Aorta (tissue), 5 donors: ENCODE measurements at regions of chr6 and their contacts with region 1.

Region 1: GRCh38 chr6:163031931-163032330 is 304.2 kb downstream of the PACRG start:
- DNase-seq: no peak
- ATAC-seq: no peak
- H3K4me3 ChIP-seq: no peak overlapping the region
- H3K27ac ChIP-seq: no peak overlapping the region
- H3K4me1 ChIP-seq: no peaks in the 10 kb centered on the region
- H3K27me3 ChIP-seq: no peaks in the 10 kb centered on the region

Region 2: DNA sequence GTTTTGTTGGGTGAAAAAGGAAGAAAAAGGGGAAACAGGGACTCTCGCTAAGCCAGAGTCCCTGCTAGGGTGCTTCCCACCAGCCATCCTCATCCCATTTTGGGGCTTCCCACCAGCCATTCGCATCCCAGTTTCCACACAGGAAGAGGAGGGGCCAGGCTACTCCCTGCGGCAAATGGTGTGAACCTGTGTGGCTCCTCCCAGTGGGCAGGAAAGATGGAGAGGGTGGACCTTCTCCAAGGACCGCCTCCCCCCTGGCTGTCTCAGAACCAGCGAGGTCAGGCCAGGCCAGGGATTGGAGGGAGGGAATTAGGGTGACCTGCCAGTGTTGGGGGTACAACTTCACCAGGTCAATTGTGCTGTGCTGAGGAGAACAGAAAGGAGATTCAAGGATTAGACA is 22.7 kb after region 1 on chr6:
- intact Hi-C with region 1: loop called in 1 of 2 experiments (anchors 1 kb)
- DNase-seq: no peak
- ATAC-seq: no peak
- H3K4me3 ChIP-seq: no peak overlapping the region
- H3K27ac ChIP-seq: no peak overlapping the region
- H3K4me1 ChIP-seq: no peaks in the 10 kb centered on the region
- H3K27me3 ChIP-seq: no peaks in the 10 kb centered on the region